Activated naive CD4-positive, alpha-beta T cell treated with anti-CD3 and anti-CD28 coated beads for 36 hours (primary cell): ENCODE measurements at regions of chr4 and their contacts with region 1.

Region 1: GRCh38 chr4:40719008-40719623 is 30.6 kb upstream of the NSUN7 start:
- DNase-seq: peak; percentile 27
- H3K4me3 Mint-ChIP-seq: no peak overlapping the region
- H3K27ac Mint-ChIP-seq: no peak overlapping the region
- H3K4me1 Mint-ChIP-seq: peaks cover 8% of the 10 kb centered on the region
- H3K27me3 Mint-ChIP-seq: no peaks in the 10 kb centered on the region

Region 2: GRCh38 chr4:39469429-39470077 is 1249.6 kb before region 1 on chr4:
- CTCF ChIA-PET with region 1: no interaction called
- intact Hi-C with region 1: loop called (anchors 1 kb)
- DNase-seq: peak; percentile 24
- H3K4me3 Mint-ChIP-seq: no peak overlapping the region
- H3K27ac Mint-ChIP-seq: peak overlapping the region; percentile 37
- H3K4me1 Mint-ChIP-seq: peaks cover 12% of the 10 kb centered on the region
- H3K27me3 Mint-ChIP-seq: no peaks in the 10 kb centered on the region

Region 3: DNA sequence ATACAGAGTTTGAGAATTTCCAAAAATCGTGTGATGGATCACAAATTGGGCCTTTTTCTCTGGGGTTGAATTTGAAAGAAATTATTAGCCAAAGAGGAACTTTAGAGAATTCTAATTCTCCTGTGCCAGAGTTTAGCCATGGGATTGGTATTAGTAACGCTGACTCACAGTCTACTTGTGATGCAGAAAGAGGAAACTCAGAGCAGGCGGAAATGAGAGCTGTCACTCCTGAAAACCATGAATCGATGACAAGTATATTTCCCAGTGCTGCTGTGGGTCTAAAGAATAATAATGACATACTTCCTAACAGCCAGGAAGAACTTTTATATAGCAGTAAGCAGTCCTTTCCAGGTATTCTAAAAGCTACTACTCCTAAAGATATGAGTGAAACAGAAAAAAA is 597.6 kb before region 1 on chr4:
- CTCF ChIA-PET with region 1: no interaction called
- intact Hi-C with region 1: loop called (anchors 5 kb)
- DNase-seq: peak; percentile 51
- H3K4me3 Mint-ChIP-seq: no peak overlapping the region
- H3K27ac Mint-ChIP-seq: peak overlapping the region; percentile 61
- H3K4me1 Mint-ChIP-seq: peaks cover 46% of the 10 kb centered on the region
- H3K27me3 Mint-ChIP-seq: no peaks in the 10 kb centered on the region

Region 4: DNA sequence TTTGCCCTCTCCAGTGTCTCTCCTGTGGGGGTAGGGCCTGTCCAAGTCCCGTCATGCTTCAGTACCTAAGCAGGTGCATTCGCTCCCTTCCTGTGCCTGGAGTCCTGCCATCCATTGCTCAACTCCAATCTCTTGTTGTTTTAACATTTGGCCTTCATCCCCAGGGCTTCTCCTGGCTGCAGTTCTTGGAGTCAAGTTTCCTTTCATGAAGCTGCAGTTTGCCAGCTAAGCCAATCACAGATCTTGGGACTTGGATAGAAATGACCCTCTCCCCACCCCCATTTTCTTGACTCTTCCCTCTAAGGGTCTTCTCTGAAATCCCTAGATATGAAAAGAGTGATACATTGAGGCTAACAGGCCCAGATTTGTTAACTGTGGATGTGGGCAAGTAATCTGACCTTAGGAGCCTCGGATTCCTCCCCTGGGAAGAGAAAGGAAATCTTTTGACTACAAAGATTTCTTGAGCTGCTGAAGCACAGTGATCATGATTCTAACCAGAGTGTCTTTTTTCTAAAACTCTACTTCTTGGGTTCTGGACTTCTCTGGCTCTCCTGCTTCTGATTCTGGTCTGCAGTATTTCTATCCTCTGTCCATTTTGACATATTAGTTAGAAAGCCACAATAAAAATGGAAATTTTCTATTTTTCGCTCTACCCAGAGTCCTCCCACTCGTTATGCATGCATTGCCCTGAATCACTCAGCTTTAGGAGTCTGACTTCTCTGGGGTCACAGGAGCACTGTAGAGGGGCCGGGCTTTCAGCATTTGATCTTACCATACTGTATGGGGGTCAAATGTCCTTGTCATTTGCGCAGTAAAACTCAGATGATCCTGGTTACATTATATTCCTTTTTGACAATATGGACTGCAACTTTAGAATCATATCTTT is 323.0 kb before region 1 on chr4:
- CTCF ChIA-PET with region 1: no interaction called
- intact Hi-C with region 1: no loop called
- DNase-seq: no peak
- H3K4me3 Mint-ChIP-seq: no peak overlapping the region
- H3K27ac Mint-ChIP-seq: no peak overlapping the region
- H3K4me1 Mint-ChIP-seq: no peaks in the 10 kb centered on the region
- H3K27me3 Mint-ChIP-seq: no peaks in the 10 kb centered on the region

Region 5: DNA sequence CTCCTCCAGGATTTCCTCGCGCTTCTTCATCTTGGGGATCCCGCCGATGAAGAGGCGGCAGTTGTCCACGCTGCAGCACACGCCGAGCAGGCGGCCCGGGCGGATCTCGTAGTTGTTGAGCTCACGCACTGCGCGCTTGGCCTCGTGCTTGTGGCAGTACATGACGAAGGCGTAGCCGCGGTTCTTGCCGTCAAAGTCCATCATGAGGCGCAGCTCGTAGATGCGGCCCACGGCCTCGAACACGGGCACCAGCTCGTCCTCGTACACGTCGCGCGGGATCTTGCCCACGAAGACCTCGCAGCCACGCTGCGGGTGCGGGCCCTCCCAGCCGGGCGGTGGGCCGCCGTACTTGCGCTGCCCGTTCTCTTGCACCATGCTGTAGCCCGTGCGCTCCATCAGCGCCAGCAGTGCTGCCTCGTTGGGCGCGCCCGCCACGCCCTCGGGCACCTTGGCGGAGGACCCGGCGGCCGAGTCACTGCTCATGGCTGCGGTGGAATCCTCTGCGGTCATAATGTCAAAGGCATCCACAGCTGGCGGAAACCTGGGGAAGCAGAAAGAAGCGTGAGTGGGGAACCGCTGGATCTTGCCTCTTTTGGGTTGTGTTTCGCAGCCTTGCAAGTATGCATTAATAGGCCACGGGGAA is 280.6 kb before region 1 on chr4:
- CTCF ChIA-PET with region 1: no interaction called
- intact Hi-C with region 1: loop called (anchors 1 kb)
- DNase-seq: no peak
- H3K4me3 Mint-ChIP-seq: no peak overlapping the region
- H3K27ac Mint-ChIP-seq: no peak overlapping the region
- H3K4me1 Mint-ChIP-seq: peaks cover 36% of the 10 kb centered on the region
- H3K27me3 Mint-ChIP-seq: no peaks in the 10 kb centered on the region

Region 6: DNA sequence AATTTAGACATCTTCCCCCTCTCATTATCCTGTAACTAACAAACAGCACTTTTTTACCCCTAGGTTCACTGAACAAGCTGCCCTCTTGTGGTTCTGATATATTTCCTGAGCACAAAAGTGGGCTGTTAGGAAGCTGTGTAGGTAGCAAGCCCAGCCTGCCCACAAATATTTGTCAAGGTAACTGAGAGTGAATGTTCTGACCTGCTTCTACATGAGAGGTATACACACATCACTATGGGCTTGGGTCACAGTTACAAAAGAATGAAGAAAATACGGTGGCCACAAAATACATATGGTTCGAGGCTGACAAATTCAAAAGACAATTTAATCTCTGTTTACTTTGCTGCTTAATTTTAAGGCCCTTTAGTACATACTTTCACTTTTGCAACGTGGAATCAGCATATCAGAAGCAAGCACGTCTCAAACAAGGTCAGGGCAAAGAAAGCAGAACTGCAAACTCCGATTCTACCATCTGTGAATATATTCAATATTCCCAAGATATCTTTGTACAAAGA is 168.1 kb before region 1 on chr4:
- CTCF ChIA-PET with region 1: no interaction called
- intact Hi-C with region 1: loop called (anchors 1 kb)
- DNase-seq: peak; percentile 34
- H3K4me3 Mint-ChIP-seq: peak overlapping the region; percentile 60
- H3K27ac Mint-ChIP-seq: peak overlapping the region; percentile 55
- H3K4me1 Mint-ChIP-seq: peaks cover 28% of the 10 kb centered on the region
- H3K27me3 Mint-ChIP-seq: no peaks in the 10 kb centered on the region

Region 7: DNA sequence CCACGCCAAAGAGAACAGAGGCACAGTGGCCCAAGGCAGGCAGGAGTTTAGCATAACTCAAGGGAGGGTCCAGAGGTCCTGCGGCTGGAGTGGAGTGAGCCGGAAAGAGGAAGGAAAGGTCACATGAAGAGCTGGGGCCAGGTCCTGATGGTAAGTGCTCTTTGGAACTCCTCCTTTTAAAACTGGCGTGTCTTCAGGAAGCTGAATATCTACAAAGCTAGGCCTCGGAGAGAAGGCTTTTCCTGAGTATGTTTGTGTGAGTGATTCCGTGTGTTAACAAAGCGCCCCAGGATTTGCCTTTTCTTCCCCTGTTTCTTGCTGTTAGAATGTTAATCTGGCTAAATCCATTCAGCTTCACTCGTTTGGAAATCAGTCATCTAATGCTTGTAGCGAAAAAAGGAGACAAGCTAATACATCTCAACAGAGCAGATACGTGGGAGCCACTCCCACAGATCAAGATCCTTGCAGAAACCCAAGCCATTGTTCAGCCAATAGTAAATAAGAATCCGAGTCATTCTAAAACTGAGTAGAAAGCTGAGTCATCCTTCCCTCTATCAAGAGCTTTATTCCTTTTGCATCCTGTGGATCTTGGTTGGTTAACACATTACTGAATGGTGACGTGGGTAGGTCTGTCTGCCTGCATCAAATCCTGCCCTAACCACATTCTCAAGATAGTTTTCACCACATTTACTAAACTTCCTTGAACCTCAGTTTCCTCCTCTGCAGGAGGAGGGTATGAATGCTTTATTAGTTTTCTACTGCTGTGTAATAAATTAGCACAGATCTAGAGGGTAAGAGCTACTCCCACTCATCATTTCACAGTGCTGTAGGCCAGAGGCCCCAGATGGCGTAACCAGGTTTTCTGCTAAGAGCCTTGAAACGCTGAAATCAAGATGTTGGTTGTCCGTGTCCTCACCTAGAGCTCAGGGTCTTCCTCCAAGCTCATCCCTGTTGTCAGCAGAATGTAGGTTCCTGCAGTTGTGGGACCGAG is 46.3 kb before region 1 on chr4:
- CTCF ChIA-PET with region 1: interaction called, 5 read pairs
- intact Hi-C with region 1: loop called (anchors 1 kb)
- DNase-seq: peak; percentile 67
- H3K4me3 Mint-ChIP-seq: peak overlapping the region; percentile 32
- H3K27ac Mint-ChIP-seq: peak overlapping the region; percentile 86
- H3K4me1 Mint-ChIP-seq: peaks cover 37% of the 10 kb centered on the region
- H3K27me3 Mint-ChIP-seq: no peaks in the 10 kb centered on the region

Region 8: GRCh38 chr4:40685300-40685699 is 33.8 kb before region 1 on chr4:
- CTCF ChIA-PET with region 1: no interaction called
- intact Hi-C with region 1: no loop called
- DNase-seq: no peak
- H3K4me3 Mint-ChIP-seq: no peak overlapping the region
- H3K27ac Mint-ChIP-seq: no peak overlapping the region
- H3K4me1 Mint-ChIP-seq: peaks cover 12% of the 10 kb centered on the region
- H3K27me3 Mint-ChIP-seq: no peaks in the 10 kb centered on the region